Adrenal gland (tissue), 19 donors: ENCODE measurements at regions of chr1 and their contacts with region 1.

Region 1: GRCh38 chr1:182962554-182963115 is 9.7 kb upstream of the SHCBP1L start:
- DNase-seq: peak; percentile 62 to 90 (median 80)
- H3K4me3 ChIP-seq: peak overlapping the region in 2 of 4 donors; percentile 15 to 56
- H3K27ac ChIP-seq: peak overlapping the region in 2 of 5 donors; percentile 46 to 56
- H3K4me1 ChIP-seq: peaks cover 0 to 7% of the 10 kb centered on the region in 2 donors
- H3K27me3 ChIP-seq: no peaks in the 10 kb centered on the region
- CTCF ChIP-seq: peak; percentile 87 to 97 (median 91)
- POLR2A ChIP-seq: peak in 1 of 2 donors; percentile 79

Region 2: GRCh38 chr1:183023601-183024316 is 61.1 kb after region 1 on chr1:
- intact Hi-C with region 1: loop called in 1 of 2 experiments (anchors 5 kb)
- DNase-seq: peak; percentile 56 to 83 (median 66)
- H3K4me3 ChIP-seq: peak overlapping the region in 3 of 4 donors; percentile 42 to 85 (median 57)
- H3K27ac ChIP-seq: peak overlapping the region; percentile 23 to 100 (median 100)
- H3K4me1 ChIP-seq: peaks cover 0 to 41% of the 10 kb centered on the region in 2 donors
- H3K27me3 ChIP-seq: no peaks in the 10 kb centered on the region
- CTCF ChIP-seq: peak in 5 of 6 experiments; percentile 40 to 60 (median 43)
- POLR2A ChIP-seq: peak in 1 of 2 donors; percentile 28

Region 3: GRCh38 chr1:183139281-183139942 is 176.8 kb after region 1 on chr1:
- intact Hi-C with region 1: loop called in 1 of 2 experiments (anchors 10 kb)
- DNase-seq: no peak
- H3K4me3 ChIP-seq: no peak overlapping the region
- H3K27ac ChIP-seq: peak overlapping the region in 1 of 5 donors; percentile 6
- H3K4me1 ChIP-seq: no peaks in the 10 kb centered on the region
- H3K27me3 ChIP-seq: no peaks in the 10 kb centered on the region
- CTCF ChIP-seq: no peak
- POLR2A ChIP-seq: no peak

Region 4: GRCh38 chr1:183227963-183228649 is 265.5 kb after region 1 on chr1:
- intact Hi-C with region 1: loop called (anchors 5 to 10 kb)
- DNase-seq: peak; percentile 33 to 69 (median 41)
- H3K4me3 ChIP-seq: no peak overlapping the region
- H3K27ac ChIP-seq: no peak overlapping the region
- H3K4me1 ChIP-seq: no peaks in the 10 kb centered on the region
- H3K27me3 ChIP-seq: no peaks in the 10 kb centered on the region
- CTCF ChIP-seq: peak; percentile 31 to 72 (median 60)
- POLR2A ChIP-seq: no peak